K562 (cell line): ENCODE measurements at regions of chr18 and their contacts with region 1.

Region 1: GRCh38 chr18:70195852-70196434 is 9.5 kb downstream of the RTTN start:
- DNase-seq: peak in 3 of 4 experiments; percentile 12 to 29 (median 16)
- ATAC-seq: peak; percentile 72
- H3K4me3 ChIP-seq: no peak overlapping the region
- H3K27ac ChIP-seq: no peak overlapping the region
- H3K4me1 ChIP-seq: no peaks in the 10 kb centered on the region
- H3K27me3 ChIP-seq: no peaks in the 10 kb centered on the region
- CTCF ChIP-seq: peak; percentile 50 to 66 (median 51); a peak in 5 of 6 replicates
- EP300 ChIP-seq: no peak
- POLR2A ChIP-seq: no peak
- RAD21 ChIP-seq: peak; percentile 76 to 77

Region 2: DNA sequence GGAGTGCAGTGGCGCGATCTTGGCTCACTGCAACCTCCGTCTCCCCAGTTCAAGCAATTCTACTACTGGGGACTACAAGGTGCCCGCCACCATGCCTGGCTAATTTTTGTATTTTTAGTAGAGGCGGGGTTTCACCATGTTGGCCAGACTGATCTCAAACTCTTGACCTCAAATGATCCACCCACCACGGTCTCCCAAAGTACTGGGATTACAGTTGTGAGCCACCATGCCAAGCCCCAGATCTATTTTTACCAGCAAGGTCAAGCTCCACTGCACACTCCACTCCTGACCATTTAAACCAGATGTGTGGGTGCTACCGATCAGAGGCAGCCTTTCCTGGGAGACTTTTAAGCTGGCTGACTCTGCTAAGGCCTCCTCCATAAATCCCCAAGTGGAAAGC is 180.8 kb before region 1 on chr18:
- CTCF ChIA-PET with region 1: no interaction called
- POLR2A ChIA-PET with region 1: no interaction called
- in situ Hi-C with region 1: no loop called
- intact Hi-C with region 1: no loop called
- DNase-seq: no peak
- ATAC-seq: no peak
- H3K4me3 ChIP-seq: no peak overlapping the region
- H3K27ac ChIP-seq: no peak overlapping the region
- H3K4me1 ChIP-seq: no peaks in the 10 kb centered on the region; a peak in 1 of 5 replicates
- H3K27me3 ChIP-seq: no peaks in the 10 kb centered on the region
- CTCF ChIP-seq: no peak
- EP300 ChIP-seq: no peak
- POLR2A ChIP-seq: no peak
- RAD21 ChIP-seq: no peak

Region 3: DNA sequence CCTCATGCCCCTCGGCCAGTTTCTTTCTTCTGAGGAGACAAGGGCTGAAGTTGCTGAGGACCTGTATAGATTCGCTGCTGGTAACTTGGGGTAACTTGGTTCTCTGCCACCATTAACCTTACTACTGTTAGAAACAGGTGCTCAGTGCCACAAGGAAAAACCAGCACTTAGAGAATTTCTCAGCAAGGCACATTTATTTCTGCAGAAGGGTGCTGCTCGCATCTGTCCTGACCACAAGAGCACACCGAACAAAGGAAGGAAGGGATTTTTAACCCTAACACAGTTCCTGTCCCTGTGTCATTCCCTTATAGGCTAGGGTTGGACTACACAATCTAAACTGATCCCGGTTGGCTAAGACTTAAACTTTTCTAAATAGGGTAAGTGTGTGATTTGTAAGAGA is 247.0 kb after region 1 on chr18:
- CTCF ChIA-PET with region 1: no interaction called
- POLR2A ChIA-PET with region 1: no interaction called
- in situ Hi-C with region 1: loop called (anchors 10 kb)
- intact Hi-C with region 1: no loop called
- DNase-seq: no peak
- ATAC-seq: no peak
- H3K4me3 ChIP-seq: no peak overlapping the region
- H3K27ac ChIP-seq: no peak overlapping the region
- H3K4me1 ChIP-seq: peaks cover 0 to 3% of the 10 kb centered on the region in 2 experiments; a peak in 1 of 5 replicates
- H3K27me3 ChIP-seq: no peaks in the 10 kb centered on the region
- CTCF ChIP-seq: no peak
- EP300 ChIP-seq: no peak
- POLR2A ChIP-seq: no peak
- RAD21 ChIP-seq: no peak